Gastrocnemius medialis (tissue), 4 donors: ENCODE measurements at regions of chr17 and their contacts with region 1.

Region 1: DNA sequence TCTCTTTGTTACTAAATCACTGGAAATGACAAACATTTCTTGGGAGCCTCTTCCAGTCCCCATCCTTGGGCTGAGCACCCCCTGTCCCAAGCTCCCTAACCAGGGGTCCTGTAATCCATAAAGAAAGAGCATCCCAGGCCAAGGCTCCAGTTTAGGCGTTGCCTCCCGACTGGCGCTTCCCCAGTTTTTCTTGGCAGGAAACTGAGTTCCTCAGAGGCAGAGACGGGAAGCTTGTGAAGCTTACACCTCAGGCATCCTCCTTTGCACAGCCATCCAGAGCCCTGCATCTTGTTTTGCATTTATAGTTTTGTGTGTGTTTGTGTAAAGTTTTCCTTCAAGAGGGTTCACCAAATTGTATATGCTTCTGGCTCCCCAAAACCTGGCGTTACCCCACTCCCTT is 7.1 kb downstream of the COPZ2 start:
- DNase-seq: no peak
- ATAC-seq: no peak
- H3K4me3 ChIP-seq: no peak overlapping the region
- H3K27ac ChIP-seq: no peak overlapping the region
- H3K4me1 ChIP-seq: peaks cover 16 to 19% of the 10 kb centered on the region in 2 donors
- H3K27me3 ChIP-seq: no peaks in the 10 kb centered on the region
- CTCF ChIP-seq: no peak
- POLR2A ChIP-seq: no peak

Region 2: GRCh38 chr17:47879028-47879585 is 151.4 kb before region 1 on chr17:
- in situ Hi-C with region 1: no loop called
- intact Hi-C with region 1: no loop called
- DNase-seq: no peak
- ATAC-seq: no peak
- H3K4me3 ChIP-seq: no peak overlapping the region
- H3K27ac ChIP-seq: no peak overlapping the region
- H3K4me1 ChIP-seq: peaks cover 4 to 5% of the 10 kb centered on the region in 2 donors
- H3K27me3 ChIP-seq: peaks cover 19 to 27% (median 19%) of the 10 kb centered on the region in 3 donors
- CTCF ChIP-seq: no peak
- POLR2A ChIP-seq: no peak

Region 3: GRCh38 chr17:48002266-48002915 is 28.1 kb before region 1 on chr17:
- in situ Hi-C with region 1: no loop called
- intact Hi-C with region 1: no loop called
- DNase-seq: no peak
- ATAC-seq: peak; percentile 62 to 66
- H3K4me3 ChIP-seq: no peak overlapping the region
- H3K27ac ChIP-seq: peak overlapping the region in 1 of 4 donors; percentile 29
- H3K4me1 ChIP-seq: peaks cover 0 to 8% of the 10 kb centered on the region in 2 donors
- H3K27me3 ChIP-seq: peaks cover 0 to 2% (median 0%) of the 10 kb centered on the region in 3 donors
- CTCF ChIP-seq: no peak
- POLR2A ChIP-seq: no peak

Region 4: DNA sequence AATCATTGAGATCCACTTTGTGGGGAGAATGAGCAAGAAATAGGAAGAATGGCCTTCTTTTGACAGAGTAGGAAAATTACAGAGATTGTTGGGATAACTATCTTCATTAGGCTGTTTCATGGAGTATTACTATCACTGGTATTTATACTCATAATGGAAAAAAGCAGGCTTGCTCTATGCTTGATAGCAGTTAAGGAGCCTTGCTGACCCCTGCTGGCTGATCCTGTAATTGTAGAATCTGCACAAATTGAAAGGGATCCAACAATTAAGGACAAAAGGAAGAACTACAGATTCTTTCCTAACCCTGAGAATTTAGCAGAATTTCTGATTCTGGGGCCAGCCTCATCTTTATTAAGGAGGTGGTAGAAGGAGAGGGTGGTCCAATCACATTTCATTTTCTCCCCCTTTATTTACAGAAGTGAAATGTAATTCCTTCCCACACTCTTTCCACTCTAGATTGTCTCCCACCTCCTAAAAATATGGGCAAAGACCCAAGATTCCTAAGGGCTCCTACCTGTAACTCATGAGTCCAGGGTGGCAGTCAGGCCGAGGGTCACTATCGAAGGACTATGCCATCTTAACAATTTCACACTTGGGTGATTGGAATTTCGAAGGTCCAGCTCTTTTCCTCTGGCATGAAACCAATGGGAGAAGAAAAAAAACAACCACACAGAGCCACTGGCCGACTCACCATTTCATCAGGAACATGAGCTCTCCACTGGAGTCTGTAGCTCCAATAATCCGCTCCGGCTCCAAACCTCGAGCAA is 44.0 kb after region 1 on chr17:
- in situ Hi-C with region 1: loop called (anchors 5 kb)
- intact Hi-C with region 1: loop called (anchors 1 kb)
- DNase-seq: peak; percentile 56 to 79
- ATAC-seq: peak; percentile 68 to 80
- H3K4me3 ChIP-seq: no peak overlapping the region
- H3K27ac ChIP-seq: peak overlapping the region; percentile 68 to 97 (median 82)
- H3K4me1 ChIP-seq: peaks cover 6 to 14% of the 10 kb centered on the region in 2 donors
- H3K27me3 ChIP-seq: no peaks in the 10 kb centered on the region
- CTCF ChIP-seq: peak; percentile 83 to 97 (median 86)
- POLR2A ChIP-seq: no peak